Posterior vena cava (tissue), 2 donors: ENCODE measurements at regions of chr2 and their contacts with region 1.

Region 1: GRCh38 chr2:74415762-74416395 is 5.5 kb downstream of the C2orf81 start:
- DNase-seq: no peak

Region 2: GRCh38 chr2:74367789-74368188 is 48.1 kb before region 1 on chr2:
- intact Hi-C with region 1: loop called in 1 of 2 experiments (anchors 1 kb)
- DNase-seq: no peak